Endothelial cell of umbilical vein (primary cell): ENCODE measurements at regions of chr5 and their contacts with region 1.

Region 1: GRCh38 chr5:115544436-115545350 is at the start of gene FEM1C:
- DNase-seq: peak; percentile 98
- H3K4me3 ChIP-seq: peak within 1 kb of the TSS; percentile 90 to 99 (median 97)
- H3K27ac ChIP-seq: peak within 1 kb of the TSS; percentile 89
- H3K4me1 ChIP-seq: peaks cover 25% of the 10 kb centered on the region
- H3K27me3 ChIP-seq: no peaks in the 10 kb centered on the region
- CTCF ChIP-seq: no peak
- POLR2A ChIP-seq: peak; percentile 92
- total RNA-seq, gene FEM1C: 16.0 and 16.7 TPM in 2 replicates

Region 2: DNA sequence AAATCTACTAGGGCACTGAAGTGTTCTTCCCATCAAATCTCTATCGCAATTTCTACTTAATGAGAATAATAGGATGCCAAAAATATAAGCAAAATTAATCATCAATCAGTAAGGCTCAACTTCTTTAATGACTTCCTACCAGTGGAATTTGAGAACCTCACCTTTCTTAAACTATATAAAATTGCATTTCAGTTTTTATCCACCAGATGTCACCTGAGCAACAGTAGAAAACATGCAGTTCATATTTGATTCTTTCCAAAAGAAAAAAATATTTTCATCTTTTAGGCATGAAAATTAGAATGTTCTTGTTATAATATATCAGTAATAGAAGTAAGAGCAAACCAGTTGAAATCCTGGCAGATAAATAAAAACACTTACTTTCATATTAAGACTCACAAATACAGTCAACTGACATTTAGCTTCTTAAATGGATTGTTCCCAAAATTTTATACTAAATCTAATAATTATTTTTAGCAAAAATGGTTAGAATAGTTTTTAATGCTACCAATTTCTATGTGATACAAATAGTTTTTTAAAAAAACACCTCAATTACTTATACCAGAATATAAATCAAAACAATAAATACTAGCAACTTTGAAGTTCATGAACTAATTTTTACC is 234.8 kb before region 1 on chr5:
- CTCF ChIA-PET with region 1: interaction called, 42 read pairs
- POLR2A ChIA-PET with region 1: interaction called, 3 read pairs
- dilution Hi-C with region 1: loop called (anchors 25 kb)
- intact Hi-C with region 1: loop called (anchors 1 kb)
- DNase-seq: peak; percentile 69
- H3K4me3 ChIP-seq: no peak overlapping the region
- H3K27ac ChIP-seq: no peak overlapping the region
- H3K4me1 ChIP-seq: no peaks in the 10 kb centered on the region
- H3K27me3 ChIP-seq: no peaks in the 10 kb centered on the region
- CTCF ChIP-seq: peak in 1 of 2 donors; percentile 16
- POLR2A ChIP-seq: no peak

Region 3: GRCh38 chr5:115366223-115366622 is 178.5 kb before region 1 on chr5:
- CTCF ChIA-PET with region 1: interaction called, 3 read pairs
- POLR2A ChIA-PET with region 1: interaction called, 5 read pairs
- dilution Hi-C with region 1: no loop called
- intact Hi-C with region 1: loop called (anchors 1 kb)
- DNase-seq: peak; percentile 96
- H3K4me3 ChIP-seq: no peak overlapping the region
- H3K27ac ChIP-seq: peak overlapping the region; percentile 71
- H3K4me1 ChIP-seq: peaks cover 19% of the 10 kb centered on the region
- H3K27me3 ChIP-seq: no peaks in the 10 kb centered on the region
- CTCF ChIP-seq: peak in 1 of 2 donors; percentile 43
- POLR2A ChIP-seq: no peak

Region 4: DNA sequence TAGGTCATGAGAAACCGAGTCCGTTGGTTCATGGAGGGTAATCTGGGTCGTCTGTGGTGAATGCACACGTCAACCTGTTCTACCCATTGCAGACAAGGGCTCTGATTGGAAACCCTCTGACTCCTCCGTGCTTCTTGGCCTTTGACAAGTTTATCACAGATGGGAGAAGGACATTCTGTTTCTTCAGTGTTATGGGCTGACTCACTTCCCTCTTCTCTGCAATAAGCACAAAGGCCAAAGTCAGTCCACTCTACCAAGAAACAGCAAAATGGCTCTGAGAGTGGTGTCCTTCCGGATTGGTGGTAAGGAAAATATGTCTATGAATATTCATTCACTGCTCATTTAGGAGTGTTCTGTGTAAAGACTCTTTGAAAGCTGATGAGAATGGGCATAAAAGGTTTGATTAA is 89.4 kb before region 1 on chr5:
- CTCF ChIA-PET with region 1: no interaction called
- POLR2A ChIA-PET with region 1: no interaction called
- dilution Hi-C with region 1: no loop called
- intact Hi-C with region 1: loop called (anchors 1 kb)
- DNase-seq: peak; percentile 87
- H3K4me3 ChIP-seq: no peak overlapping the region
- H3K27ac ChIP-seq: peak overlapping the region; percentile 56
- H3K4me1 ChIP-seq: peaks cover 27% of the 10 kb centered on the region
- H3K27me3 ChIP-seq: no peaks in the 10 kb centered on the region
- CTCF ChIP-seq: no peak
- POLR2A ChIP-seq: no peak

Region 5: GRCh38 chr5:115557667-115558387 is 13.1 kb after region 1 on chr5:
- CTCF ChIA-PET with region 1: interaction called, 3 read pairs
- POLR2A ChIA-PET with region 1: interaction called, 4 read pairs
- dilution Hi-C with region 1: no loop called
- intact Hi-C with region 1: loop called (anchors 1 kb)
- DNase-seq: peak; percentile 74
- H3K4me3 ChIP-seq: no peak overlapping the region
- H3K27ac ChIP-seq: peak overlapping the region; percentile 94
- H3K4me1 ChIP-seq: peaks cover 29% of the 10 kb centered on the region
- H3K27me3 ChIP-seq: no peaks in the 10 kb centered on the region
- CTCF ChIP-seq: no peak
- POLR2A ChIP-seq: no peak

Region 6: DNA sequence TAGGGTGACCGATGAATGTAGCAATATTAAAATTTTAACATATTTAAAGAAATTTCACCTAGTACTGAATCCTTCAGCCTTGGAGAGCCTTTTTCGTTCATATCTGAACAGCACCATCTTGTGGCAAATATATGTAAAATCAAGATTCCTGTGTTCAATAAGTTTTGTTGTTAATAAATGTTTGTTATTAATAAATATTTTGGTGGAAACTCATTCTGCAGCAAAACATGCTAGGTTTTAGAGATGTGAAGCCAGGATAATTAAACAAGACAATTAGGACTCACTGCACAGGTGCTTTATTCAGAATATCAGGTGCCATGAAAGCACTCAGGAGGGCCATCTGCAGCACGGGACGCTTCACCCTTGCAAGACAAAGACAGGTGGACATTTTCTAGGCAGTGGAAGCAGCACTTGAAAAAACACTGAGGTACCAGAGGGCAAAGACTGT is 41.9 kb after region 1 on chr5:
- CTCF ChIA-PET with region 1: interaction called, 4 read pairs
- POLR2A ChIA-PET with region 1: no interaction called
- dilution Hi-C with region 1: no loop called
- intact Hi-C with region 1: loop called (anchors 1 kb)
- DNase-seq: peak; percentile 41
- H3K4me3 ChIP-seq: no peak overlapping the region
- H3K27ac ChIP-seq: no peak overlapping the region
- H3K4me1 ChIP-seq: peaks cover 4% of the 10 kb centered on the region
- H3K27me3 ChIP-seq: no peaks in the 10 kb centered on the region
- CTCF ChIP-seq: no peak
- POLR2A ChIP-seq: no peak

Region 7: DNA sequence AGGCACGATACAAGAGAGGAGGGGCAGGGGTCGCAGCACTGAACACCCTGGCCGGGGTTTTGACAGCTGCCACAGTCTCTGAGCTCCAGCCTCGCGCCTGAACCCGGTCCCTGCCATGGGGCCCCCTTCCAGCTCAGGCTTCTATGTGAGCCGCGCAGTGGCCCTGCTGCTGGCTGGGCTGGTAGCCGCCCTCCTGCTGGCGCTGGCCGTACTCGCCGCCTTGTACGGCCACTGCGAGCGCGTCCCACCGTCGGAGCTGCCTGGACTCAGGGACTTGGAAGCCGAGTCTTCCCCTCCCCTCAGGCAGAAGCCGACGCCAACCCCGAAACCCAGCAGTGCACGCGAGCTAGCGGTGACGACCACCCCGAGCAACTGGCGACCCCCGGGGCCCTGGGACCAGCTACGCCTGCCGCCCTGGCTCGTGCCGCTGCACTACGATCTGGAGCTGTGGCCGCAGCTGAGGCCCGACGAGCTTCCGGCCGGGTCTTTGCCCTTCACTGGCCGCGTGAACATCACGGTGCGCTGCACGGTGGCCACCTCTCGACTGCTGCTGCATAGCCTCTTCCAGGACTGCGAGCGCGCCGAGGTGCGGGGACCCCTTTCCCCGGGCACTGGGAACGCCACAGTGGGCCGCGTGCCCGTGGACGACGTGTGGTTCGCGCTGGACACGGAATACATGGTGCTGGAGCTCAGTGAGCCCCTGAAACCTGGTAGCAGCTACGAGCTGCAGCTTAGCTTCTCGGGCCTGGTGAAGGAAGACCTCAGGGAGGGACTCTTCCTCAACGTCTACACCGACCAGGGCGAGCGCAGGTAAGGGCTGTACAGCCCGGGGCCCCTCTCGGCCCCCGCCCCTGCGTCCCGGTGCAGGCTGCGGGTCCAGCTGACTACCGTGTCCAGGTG is 418.1 kb after region 1 on chr5:
- CTCF ChIA-PET with region 1: no interaction called
- POLR2A ChIA-PET with region 1: no interaction called
- dilution Hi-C with region 1: no loop called
- intact Hi-C with region 1: no loop called
- DNase-seq: peak; percentile 43
- H3K4me3 ChIP-seq: peak overlapping the region; percentile 12 to 48 (median 32)
- H3K27ac ChIP-seq: no peak overlapping the region
- H3K4me1 ChIP-seq: peaks cover 11% of the 10 kb centered on the region
- H3K27me3 ChIP-seq: peaks cover 3 to 40% of the 10 kb centered on the region in 2 experiments
- CTCF ChIP-seq: peak in 1 of 2 donors; percentile 9
- POLR2A ChIP-seq: no peak